ENCODE measurements at regions of chr2 and their contacts with region 1.

Region 1: GRCh38 chr2:20446917-20447436 is at the start of gene RHOB:
- DNase-seq: peak; percentile 99
- H3K4me3 ChIP-seq: peak within 1 kb of the TSS; percentile 66 to 96 (median 94)
- H3K27ac ChIP-seq: peak within 1 kb of the TSS; percentile 79
- H3K4me1 ChIP-seq: peaks cover 27% of the 10 kb centered on the region
- H3K27me3 ChIP-seq: no peaks in the 10 kb centered on the region
- CTCF ChIP-seq: no peak
- POLR2A ChIP-seq: peak; percentile 100
- total RNA-seq, gene RHOB: 830 and 937 TPM in 2 replicates

Region 2: DNA sequence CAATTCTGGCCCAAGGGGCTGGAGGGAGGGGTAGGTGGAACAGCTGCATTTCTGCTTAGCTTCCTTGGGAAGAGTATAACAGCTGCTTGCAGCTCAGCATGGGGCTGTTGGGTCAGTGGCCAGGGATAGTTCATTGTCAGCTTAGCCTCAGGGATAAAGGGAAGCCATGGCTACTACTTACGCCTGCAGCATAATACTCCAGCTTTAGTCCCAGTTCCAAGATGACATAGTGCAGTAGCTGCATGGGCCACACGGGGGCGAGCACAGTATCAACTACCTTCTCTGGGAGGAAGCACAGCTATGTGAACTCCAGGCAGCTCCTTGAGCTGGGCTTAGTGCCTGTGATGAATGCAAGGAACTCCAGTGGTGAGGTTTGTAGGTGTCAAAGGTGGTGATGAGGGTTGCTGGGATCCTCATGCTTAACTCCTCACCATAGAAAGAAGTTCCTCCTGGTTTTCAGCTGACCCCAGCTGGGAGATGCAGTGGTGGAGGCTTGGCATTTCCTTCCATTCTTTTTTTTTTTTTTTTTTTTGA is 35.5 kb before region 1 on chr2:
- CTCF ChIA-PET with region 1: interaction called, 150 read pairs
- POLR2A ChIA-PET with region 1: interaction called, 35 read pairs
- dilution Hi-C with region 1: no loop called
- intact Hi-C with region 1: loop called (anchors 1 kb)
- DNase-seq: peak; percentile 83
- H3K4me3 ChIP-seq: no peak overlapping the region
- H3K27ac ChIP-seq: no peak overlapping the region
- H3K4me1 ChIP-seq: no peaks in the 10 kb centered on the region
- H3K27me3 ChIP-seq: peaks cover 9 to 12% of the 10 kb centered on the region in 2 experiments
- CTCF ChIP-seq: peak; percentile 88 to 90
- POLR2A ChIP-seq: no peak

Region 3: DNA sequence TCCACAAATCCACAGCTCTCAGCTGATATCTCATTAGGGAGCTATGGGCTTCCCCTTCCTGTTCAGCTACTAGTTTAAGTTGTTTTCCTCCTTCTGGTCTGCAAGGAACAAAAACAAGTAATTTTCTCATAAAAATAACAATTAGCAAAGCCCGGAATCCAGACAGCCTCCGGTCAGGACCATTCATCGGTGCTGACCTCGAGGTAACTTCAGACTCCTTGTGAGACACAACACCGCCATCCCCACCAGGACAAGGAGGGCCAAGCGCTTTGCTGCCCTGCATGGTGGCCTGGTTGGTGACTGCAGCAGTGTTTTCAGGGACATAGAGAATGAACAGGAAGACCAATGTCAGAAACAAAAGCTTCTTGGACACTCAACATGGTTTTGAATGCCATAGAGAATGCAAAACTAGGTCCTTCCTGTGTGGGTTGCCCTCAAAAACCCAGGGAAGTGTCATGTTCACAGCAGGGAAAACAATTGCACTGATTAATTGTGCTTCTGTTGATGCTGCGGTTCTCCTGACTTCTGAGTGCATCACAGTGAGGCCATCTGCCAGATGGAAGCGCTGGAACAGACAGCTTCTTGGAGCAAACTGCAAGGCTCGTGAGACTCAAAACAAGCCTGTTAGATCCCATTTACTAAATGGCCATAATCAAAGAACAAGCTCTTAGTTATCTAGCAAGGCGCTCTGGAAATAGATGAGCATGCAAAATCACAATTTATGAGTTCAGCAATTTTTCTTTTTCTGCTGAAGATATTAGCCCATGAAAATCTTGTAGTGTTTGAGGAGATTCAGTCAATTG is 126.8 kb after region 1 on chr2:
- CTCF ChIA-PET with region 1: interaction called, 78 read pairs
- POLR2A ChIA-PET with region 1: interaction called, 310 read pairs
- dilution Hi-C with region 1: no loop called
- intact Hi-C with region 1: loop called (anchors 1 kb)
- DNase-seq: peak; percentile 98
- H3K4me3 ChIP-seq: no peak overlapping the region
- H3K27ac ChIP-seq: peak overlapping the region; percentile 100
- H3K4me1 ChIP-seq: peaks cover 98% of the 10 kb centered on the region
- H3K27me3 ChIP-seq: no peaks in the 10 kb centered on the region
- CTCF ChIP-seq: no peak
- POLR2A ChIP-seq: no peak

Region 4: GRCh38 chr2:20595431-20596192 is 148.6 kb after region 1 on chr2:
- CTCF ChIA-PET with region 1: interaction called, 30 read pairs
- POLR2A ChIA-PET with region 1: interaction called, 38 read pairs
- dilution Hi-C with region 1: no loop called
- intact Hi-C with region 1: loop called (anchors 1 kb)
- DNase-seq: peak; percentile 65
- H3K4me3 ChIP-seq: no peak overlapping the region
- H3K27ac ChIP-seq: peak overlapping the region; percentile 95
- H3K4me1 ChIP-seq: peaks cover 56% of the 10 kb centered on the region
- H3K27me3 ChIP-seq: no peaks in the 10 kb centered on the region
- CTCF ChIP-seq: no peak
- POLR2A ChIP-seq: peak; percentile 43

Region 5: DNA sequence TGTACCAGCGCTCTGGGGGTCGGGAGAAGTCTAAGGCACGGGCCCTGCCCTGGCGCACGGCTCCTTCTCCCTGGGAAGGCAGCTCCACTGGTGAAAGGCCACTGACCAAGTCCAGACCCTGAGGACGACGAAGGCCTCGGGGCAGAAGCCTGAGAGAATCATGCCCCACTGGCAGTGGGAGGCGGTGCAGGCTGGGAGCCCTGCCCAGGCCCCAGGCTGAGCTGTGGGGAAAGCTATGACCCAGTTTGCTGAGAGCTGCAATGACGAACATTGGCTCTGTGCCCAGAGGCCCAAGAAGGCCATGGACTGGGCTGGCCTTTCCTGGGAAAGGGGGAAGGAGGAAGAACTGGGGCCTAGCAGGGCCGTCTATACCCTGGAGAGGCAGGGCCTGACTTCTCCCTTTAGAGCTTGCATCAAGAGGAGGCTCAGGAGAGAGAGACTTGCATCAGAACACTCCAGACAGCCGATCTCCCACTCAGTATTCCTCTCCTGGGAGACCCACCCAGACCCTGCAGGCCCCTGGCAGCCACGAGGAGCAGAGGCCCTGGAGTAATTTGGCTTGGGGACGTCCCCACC is 171.0 kb after region 1 on chr2:
- CTCF ChIA-PET with region 1: interaction called, 20 read pairs
- POLR2A ChIA-PET with region 1: interaction called, 67 read pairs
- dilution Hi-C with region 1: no loop called
- intact Hi-C with region 1: loop called (anchors 1 kb)
- DNase-seq: peak; percentile 98
- H3K4me3 ChIP-seq: no peak overlapping the region
- H3K27ac ChIP-seq: peak overlapping the region; percentile 77
- H3K4me1 ChIP-seq: peaks cover 34% of the 10 kb centered on the region
- H3K27me3 ChIP-seq: no peaks in the 10 kb centered on the region
- CTCF ChIP-seq: peak; percentile 34 to 67
- POLR2A ChIP-seq: no peak

Region 6: DNA sequence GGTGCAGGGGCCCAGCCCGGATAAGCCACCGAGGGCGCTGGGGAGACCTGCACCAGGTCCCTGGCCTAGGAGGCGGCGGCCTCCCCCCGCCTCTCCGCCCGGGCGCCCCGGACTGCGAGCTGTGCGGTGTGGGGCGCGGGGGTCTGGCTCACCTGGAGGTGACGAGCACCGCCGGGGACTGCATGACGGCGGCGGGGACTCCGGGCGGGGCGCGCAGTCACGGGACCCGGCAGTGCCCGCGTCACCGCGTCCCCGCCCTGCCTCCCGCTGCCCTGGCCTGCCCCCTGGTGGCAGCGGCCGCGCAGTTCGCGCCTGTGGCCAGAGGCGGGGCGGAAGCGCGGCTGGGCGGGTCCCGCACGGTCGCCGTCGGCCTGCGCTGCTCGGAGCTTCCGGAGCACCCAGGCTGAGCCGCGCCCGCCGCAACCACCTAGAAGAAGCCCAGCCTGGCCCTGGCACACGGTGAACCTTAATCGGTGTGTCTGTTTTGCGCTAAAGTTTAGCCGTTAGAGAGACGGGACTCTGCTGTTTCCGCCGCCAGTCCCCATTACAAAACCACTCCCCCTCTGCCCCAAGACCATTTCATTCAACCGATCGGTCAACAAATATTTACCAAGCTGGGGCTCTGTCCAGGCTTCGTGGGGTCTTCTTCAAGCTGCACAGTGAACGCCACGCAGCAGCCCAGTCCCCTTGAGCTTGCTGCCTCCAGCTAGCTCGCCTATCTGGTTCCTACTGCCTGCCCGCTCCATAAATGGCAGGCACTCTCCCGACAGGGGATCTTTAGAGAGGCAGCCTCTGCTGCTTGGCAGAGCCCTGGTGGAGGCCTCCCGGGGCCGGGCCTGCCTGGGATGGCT is 204.1 kb after region 1 on chr2 and contains the start of gene HS1BP3:
- CTCF ChIA-PET with region 1: interaction called, 9 read pairs
- POLR2A ChIA-PET with region 1: interaction called, 12 read pairs
- dilution Hi-C with region 1: no loop called
- intact Hi-C with region 1: loop called (anchors 1 kb)
- DNase-seq: peak; percentile 77
- H3K4me3 ChIP-seq: peak within 1 kb of the TSS; percentile 50 to 95 (median 75)
- H3K27ac ChIP-seq: peak within 1 kb of the TSS; percentile 64
- H3K4me1 ChIP-seq: peaks cover 10% of the 10 kb centered on the region
- H3K27me3 ChIP-seq: peaks cover 9 to 10% of the 10 kb centered on the region in 2 experiments
- CTCF ChIP-seq: peak; percentile 73 to 96
- POLR2A ChIP-seq: peak; percentile 87
- total RNA-seq, gene HS1BP3: 27.8 and 33.1 TPM in 2 replicates

Region 7: GRCh38 chr2:20781656-20782265 is 334.8 kb after region 1 on chr2:
- CTCF ChIA-PET with region 1: no interaction called
- POLR2A ChIA-PET with region 1: no interaction called
- dilution Hi-C with region 1: no loop called
- intact Hi-C with region 1: no loop called
- DNase-seq: peak; percentile 38
- H3K4me3 ChIP-seq: no peak overlapping the region
- H3K27ac ChIP-seq: no peak overlapping the region
- H3K4me1 ChIP-seq: no peaks in the 10 kb centered on the region
- H3K27me3 ChIP-seq: no peaks in the 10 kb centered on the region
- CTCF ChIP-seq: peak; percentile 54 to 68
- POLR2A ChIP-seq: no peak

Region 8: DNA sequence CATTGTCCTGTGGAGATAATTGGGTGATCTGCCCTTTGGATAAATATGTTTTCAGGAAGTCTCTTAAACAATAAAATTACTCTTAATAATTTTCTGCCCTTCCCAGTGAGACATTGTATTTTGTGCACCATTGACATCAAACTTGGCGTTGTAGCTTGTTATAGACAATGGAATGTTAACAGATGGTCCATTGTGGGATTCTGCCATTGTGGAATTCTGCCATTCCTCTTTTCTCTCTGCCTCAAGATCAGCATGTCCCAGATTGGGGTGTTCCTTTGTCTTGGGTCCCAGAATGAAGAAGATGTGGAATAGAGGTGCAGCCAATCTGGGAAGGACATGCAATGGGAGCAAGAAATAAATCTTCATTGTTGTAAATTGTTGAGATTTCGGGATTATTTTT is 391.0 kb after region 1 on chr2:
- CTCF ChIA-PET with region 1: no interaction called
- POLR2A ChIA-PET with region 1: no interaction called
- dilution Hi-C with region 1: no loop called
- intact Hi-C with region 1: no loop called
- DNase-seq: no peak
- H3K4me3 ChIP-seq: no peak overlapping the region
- H3K27ac ChIP-seq: no peak overlapping the region
- H3K4me1 ChIP-seq: no peaks in the 10 kb centered on the region
- H3K27me3 ChIP-seq: peaks cover 0 to 2% of the 10 kb centered on the region in 2 experiments
- CTCF ChIP-seq: no peak
- POLR2A ChIP-seq: no peak

Region 9: GRCh38 chr2:21067859-21068537 is 621.0 kb after region 1 on chr2:
- CTCF ChIA-PET with region 1: no interaction called
- POLR2A ChIA-PET with region 1: no interaction called
- dilution Hi-C with region 1: no loop called
- intact Hi-C with region 1: no loop called
- DNase-seq: no peak
- H3K4me3 ChIP-seq: no peak overlapping the region
- H3K27ac ChIP-seq: no peak overlapping the region
- H3K4me1 ChIP-seq: peaks cover 14% of the 10 kb centered on the region
- H3K27me3 ChIP-seq: peaks cover 0 to 2% of the 10 kb centered on the region in 2 experiments
- CTCF ChIP-seq: no peak
- POLR2A ChIP-seq: no peak

Measured in endothelial cell of umbilical vein (primary cell).